BJ (cell line): ENCODE measurements at regions of chr2 and their contacts with region 1.

Region 1: DNA sequence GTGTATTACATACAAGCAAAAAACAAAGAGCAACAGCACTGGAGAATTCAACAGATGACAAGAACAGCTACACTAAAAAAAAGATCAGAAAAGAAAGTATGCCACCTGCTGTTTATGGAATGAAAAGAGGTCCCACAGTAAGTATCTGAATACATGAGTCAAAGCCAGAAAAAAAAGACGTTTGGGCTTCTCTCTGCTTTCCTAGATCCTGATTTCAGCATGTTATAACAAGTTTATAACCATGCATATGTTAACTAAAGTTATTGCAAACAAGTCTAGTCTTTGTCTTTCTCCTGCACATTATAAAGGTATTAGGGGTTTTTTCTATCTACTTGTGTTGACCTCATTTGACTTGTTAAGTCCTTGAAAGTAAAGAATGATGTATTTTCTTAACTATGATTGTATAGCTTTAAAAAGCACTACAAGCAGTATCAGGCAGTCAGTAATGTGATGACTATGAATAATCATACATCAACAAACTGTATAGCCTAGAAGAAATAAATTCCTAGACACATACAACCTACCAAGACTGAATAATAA is 108.5 kb upstream of the COL5A2 start:
- DNase-seq: peak; percentile 55
- H3K4me3 ChIP-seq: no peak overlapping the region
- H3K27me3 ChIP-seq: no peaks in the 10 kb centered on the region
- CTCF ChIP-seq: peak; percentile 52

Region 2: DNA sequence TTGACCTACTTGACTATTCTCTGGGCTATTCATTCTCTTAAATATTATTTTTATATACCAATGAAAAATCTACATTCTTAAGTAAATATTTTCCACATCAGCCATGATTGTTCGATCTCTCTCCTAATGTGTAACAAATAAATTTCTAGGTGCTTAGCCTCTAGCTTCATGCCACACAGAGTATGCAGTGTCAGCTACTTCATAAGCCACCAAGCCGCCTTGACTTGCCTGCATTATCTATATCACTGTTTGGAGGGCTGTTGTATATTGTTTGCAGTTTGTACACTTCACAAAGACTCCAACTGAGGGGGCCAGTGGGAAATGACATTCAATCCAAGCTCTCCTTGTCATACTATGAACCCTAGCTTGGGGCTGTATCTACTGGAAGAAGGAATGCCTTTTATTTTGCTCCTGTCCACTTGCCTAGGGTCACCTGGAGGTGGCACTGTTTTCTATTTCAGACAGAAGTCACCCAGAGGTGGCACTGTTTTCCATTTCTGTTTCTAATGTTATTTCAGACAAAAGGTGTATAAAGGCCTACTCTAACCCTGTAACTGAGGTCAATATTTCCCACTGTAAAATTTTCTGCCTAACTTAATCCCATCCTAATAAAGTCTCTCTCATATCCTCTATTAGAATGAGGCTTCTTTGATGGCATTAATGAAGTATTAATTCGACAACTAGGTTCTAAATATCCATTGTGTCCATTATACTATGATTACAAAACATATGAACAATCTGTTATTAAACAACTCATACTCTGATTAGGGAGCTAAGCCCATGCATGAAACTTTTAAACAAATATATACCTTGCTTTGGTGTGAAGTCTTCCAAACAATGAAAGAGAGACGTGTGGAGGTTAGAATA is 144.9 kb before region 1 on chr2:
- CTCF ChIA-PET with region 1: interaction called, 11 read pairs
- POLR2A ChIA-PET with region 1: no interaction called
- DNase-seq: no peak
- H3K4me3 ChIP-seq: no peak overlapping the region
- H3K27me3 ChIP-seq: no peaks in the 10 kb centered on the region
- CTCF ChIP-seq: peak; percentile 55

Region 3: GRCh38 chr2:189252991-189253675 is 34.9 kb before region 1 on chr2:
- CTCF ChIA-PET with region 1: no interaction called
- POLR2A ChIA-PET with region 1: no interaction called
- DNase-seq: no peak
- H3K4me3 ChIP-seq: no peak overlapping the region
- H3K27me3 ChIP-seq: no peaks in the 10 kb centered on the region
- CTCF ChIP-seq: no peak

Region 4: GRCh38 chr2:189393440-189394111 is 105.5 kb after region 1 on chr2:
- CTCF ChIA-PET with region 1: no interaction called
- POLR2A ChIA-PET with region 1: interaction called, 14 read pairs
- DNase-seq: peak; percentile 96
- H3K4me3 ChIP-seq: no peak overlapping the region
- H3K27me3 ChIP-seq: no peaks in the 10 kb centered on the region
- CTCF ChIP-seq: no peak

Region 5: GRCh38 chr2:189440947-189441708 is 153.1 kb after region 1 on chr2 and contains the start of gene WDR75:
- CTCF ChIA-PET with region 1: no interaction called
- POLR2A ChIA-PET with region 1: no interaction called
- DNase-seq: peak; percentile 66
- H3K4me3 ChIP-seq: peak within 1 kb of the TSS; percentile 84
- H3K27me3 ChIP-seq: no peaks in the 10 kb centered on the region
- CTCF ChIP-seq: no peak
- polyA plus RNA-seq, gene WDR75: 30.7 and 50.9 TPM in 2 replicates